ENCODE measurements at regions of chr12 and their contacts with region 1.

Region 1: GRCh38 chr12:125905725-125906124 is 840.5 kb downstream of the AACS start:
- DNase-seq: no peak
- H3K4me3 ChIP-seq: no peak overlapping the region
- H3K27ac ChIP-seq: no peak overlapping the region
- H3K4me1 ChIP-seq: no peaks in the 10 kb centered on the region
- H3K27me3 ChIP-seq: no peaks in the 10 kb centered on the region
- CTCF ChIP-seq: no peak
- EP300 ChIP-seq: no peak
- POLR2A ChIP-seq: no peak

Region 2: GRCh38 chr12:125674554-125675338 is 231.0 kb before region 1 on chr12:
- intact Hi-C with region 1: loop called in 1 of 4 experiments (anchors 5 kb)
- DNase-seq: no peak
- H3K4me3 ChIP-seq: no peak overlapping the region
- H3K27ac ChIP-seq: no peak overlapping the region
- H3K4me1 ChIP-seq: no peaks in the 10 kb centered on the region
- H3K27me3 ChIP-seq: no peaks in the 10 kb centered on the region
- CTCF ChIP-seq: no peak
- EP300 ChIP-seq: no peak
- POLR2A ChIP-seq: no peak

Region 3: DNA sequence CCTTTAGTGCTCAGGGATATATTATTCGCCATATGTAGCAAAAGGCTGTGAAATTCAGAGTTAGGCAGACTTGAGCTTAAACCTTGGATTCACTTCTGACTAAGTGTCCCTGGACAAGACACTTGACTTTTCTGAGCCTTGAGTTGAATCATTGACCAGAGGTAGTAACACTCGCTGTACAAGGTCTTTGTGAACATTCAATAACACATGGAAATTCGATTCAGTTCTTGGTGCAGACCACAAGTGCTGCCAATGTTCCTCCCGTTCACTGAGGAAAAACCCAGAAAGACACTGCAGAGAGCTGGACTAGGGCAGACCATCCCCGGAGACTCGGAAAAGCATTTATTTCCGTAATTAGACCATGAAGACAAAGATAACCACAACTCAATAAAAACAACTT is 60.9 kb after region 1 on chr12:
- intact Hi-C with region 1: no loop called
- DNase-seq: no peak
- H3K4me3 ChIP-seq: no peak overlapping the region
- H3K27ac ChIP-seq: no peak overlapping the region
- H3K4me1 ChIP-seq: no peaks in the 10 kb centered on the region
- H3K27me3 ChIP-seq: no peaks in the 10 kb centered on the region
- CTCF ChIP-seq: no peak
- EP300 ChIP-seq: no peak
- POLR2A ChIP-seq: no peak

Measured in ovary (tissue), 10 donors.